ENCODE measurements at regions of chr16 and their contacts with region 1.

Region 1: DNA sequence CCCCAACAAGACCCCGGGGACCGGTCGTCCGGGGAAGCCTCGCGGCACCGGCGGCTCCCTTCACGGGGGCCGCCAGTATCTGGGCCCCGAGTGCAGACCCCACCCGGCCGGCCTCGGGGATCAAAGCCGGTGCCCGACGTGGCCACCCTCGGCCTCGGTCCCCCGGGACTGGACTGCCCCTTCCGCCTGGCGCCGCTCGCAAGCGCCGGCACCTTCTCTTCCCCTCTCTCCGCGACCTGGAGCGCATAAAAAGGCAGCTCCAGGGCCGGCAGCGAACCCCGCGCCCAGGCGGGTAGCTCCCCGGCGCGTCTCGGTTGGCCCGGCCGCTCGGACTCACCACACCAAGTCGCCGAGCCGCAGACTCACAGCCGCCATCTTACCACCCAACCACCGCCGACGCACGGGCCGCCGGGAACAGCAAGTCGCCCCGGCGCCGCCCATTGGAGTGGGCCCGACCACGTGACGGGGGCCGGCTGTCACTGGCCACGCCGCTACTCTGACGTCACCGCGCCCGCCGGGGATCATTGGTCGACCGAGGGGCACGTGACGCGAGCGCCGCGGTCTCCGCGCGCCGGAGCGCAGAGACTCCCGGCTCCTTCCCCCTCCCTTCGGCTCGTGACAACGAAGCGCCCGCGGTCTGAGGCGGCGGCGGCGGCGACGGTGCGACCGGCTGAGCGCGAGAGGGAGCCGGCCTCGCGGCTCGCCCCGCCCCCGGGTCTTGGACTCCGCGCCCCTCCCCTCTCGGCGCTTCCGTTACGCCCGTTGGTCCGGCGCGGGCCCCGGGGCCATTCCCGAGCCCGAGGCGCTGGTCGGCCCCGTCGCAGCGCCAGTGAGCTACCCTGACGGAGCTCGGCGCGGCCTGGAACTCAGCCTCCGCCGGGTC is at the starts of genes GLYR1 and UBN1:
- DNase-seq: peak; percentile 99
- H3K4me3 Mint-ChIP-seq: peak within 1 kb of the TSS; percentile 91
- H3K27ac Mint-ChIP-seq: peak within 1 kb of the TSS; percentile 80
- H3K4me1 Mint-ChIP-seq: peaks cover 56% of the 10 kb centered on the region
- H3K27me3 Mint-ChIP-seq: no peaks in the 10 kb centered on the region
- total RNA-seq, gene GLYR1: 119 and 120 TPM in 2 replicates
- total RNA-seq, gene UBN1: 39.6 and 42.6 TPM in 2 replicates

Region 2: DNA sequence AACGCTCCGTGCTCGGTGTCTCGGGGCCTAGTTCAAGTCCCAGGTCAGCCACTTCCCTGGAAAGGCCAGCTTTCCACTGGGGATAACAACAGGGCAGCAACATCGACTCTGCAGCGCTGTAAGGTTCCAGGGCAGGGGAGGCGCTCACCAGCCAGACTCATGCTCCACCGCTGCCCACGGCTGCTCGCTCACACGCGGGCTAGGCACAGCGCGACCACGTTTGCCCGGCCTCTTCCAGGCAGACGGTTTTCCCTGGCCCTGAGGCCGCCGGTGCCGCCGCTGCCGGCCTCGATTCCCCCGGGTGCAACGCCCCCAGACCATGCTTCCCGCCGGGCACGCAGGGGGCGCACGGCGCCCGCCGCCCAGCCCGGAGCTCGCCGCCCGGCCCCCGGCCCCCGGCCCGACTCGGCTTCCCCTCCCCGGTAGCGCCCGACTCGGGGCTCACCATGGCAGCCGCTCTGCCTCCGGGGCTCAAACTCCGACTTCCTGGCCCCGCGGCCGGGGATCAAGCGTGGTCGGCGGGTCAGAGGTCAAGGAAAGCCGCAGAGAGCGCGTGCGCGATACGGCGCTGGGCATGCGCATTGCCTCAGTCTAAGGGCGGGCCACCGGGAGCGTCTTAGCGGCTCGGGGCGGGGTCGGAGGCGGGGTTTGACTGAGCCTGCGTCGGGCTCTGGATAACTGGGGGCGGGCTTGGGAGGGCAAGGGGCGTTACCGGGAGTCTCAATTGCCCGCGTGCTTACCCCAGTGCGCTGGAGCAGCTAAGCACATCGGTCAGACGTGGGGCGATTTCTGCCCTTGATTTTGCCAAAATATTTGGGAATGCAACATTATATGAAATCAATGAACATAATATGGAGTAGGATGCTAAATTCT is 496.1 kb before region 1 on chr16 and contains the start of gene PAM16:
- intact Hi-C with region 1: loop called (anchors 5 kb)
- DNase-seq: peak; percentile 99
- H3K4me3 Mint-ChIP-seq: peak within 1 kb of the TSS; percentile 97
- H3K27ac Mint-ChIP-seq: peak within 1 kb of the TSS; percentile 93
- H3K4me1 Mint-ChIP-seq: peaks cover 13% of the 10 kb centered on the region
- H3K27me3 Mint-ChIP-seq: no peaks in the 10 kb centered on the region
- total RNA-seq, gene PAM16: 91.5 and 106 TPM in 2 replicates

Region 3: GRCh38 chr16:4624015-4624826 is 222.9 kb before region 1 on chr16 and contains the start of gene MGRN1:
- intact Hi-C with region 1: loop called (anchors 2 kb)
- DNase-seq: peak; percentile 93
- H3K4me3 Mint-ChIP-seq: peak within 1 kb of the TSS; percentile 99
- H3K27ac Mint-ChIP-seq: peak within 1 kb of the TSS; percentile 95
- H3K4me1 Mint-ChIP-seq: peaks cover 22% of the 10 kb centered on the region
- H3K27me3 Mint-ChIP-seq: no peaks in the 10 kb centered on the region
- total RNA-seq, gene MGRN1: 110 and 119 TPM in 2 replicates

Region 4: GRCh38 chr16:4734063-4734729 is 112.9 kb before region 1 on chr16 and contains the starts of genes ANKS3 and DNAAF8:
- intact Hi-C with region 1: loop called (anchors 1 kb)
- DNase-seq: peak; percentile 81
- H3K4me3 Mint-ChIP-seq: peak within 1 kb of the TSS; percentile 88
- H3K27ac Mint-ChIP-seq: peak within 1 kb of the TSS; percentile 84
- H3K4me1 Mint-ChIP-seq: peaks cover 26% of the 10 kb centered on the region
- H3K27me3 Mint-ChIP-seq: no peaks in the 10 kb centered on the region
- total RNA-seq, gene ANKS3: 21.1 and 25.8 TPM in 2 replicates
- total RNA-seq, gene DNAAF8: not detected in 2 replicates

Region 5: GRCh38 chr16:4802659-4803287 is 44.4 kb before region 1 on chr16:
- intact Hi-C with region 1: loop called (anchors 1 kb)
- DNase-seq: peak; percentile 89
- H3K4me3 Mint-ChIP-seq: peak overlapping the region; percentile 80
- H3K27ac Mint-ChIP-seq: no peak overlapping the region
- H3K4me1 Mint-ChIP-seq: peaks cover 9% of the 10 kb centered on the region
- H3K27me3 Mint-ChIP-seq: no peaks in the 10 kb centered on the region

Region 6: GRCh38 chr16:5033256-5034169 is 186.4 kb after region 1 on chr16 and contains the start of gene NAGPA:
- intact Hi-C with region 1: loop called (anchors 5 kb)
- DNase-seq: peak; percentile 78
- H3K4me3 Mint-ChIP-seq: peak within 1 kb of the TSS; percentile 85
- H3K27ac Mint-ChIP-seq: peak within 1 kb of the TSS; percentile 76
- H3K4me1 Mint-ChIP-seq: peaks cover 15% of the 10 kb centered on the region
- H3K27me3 Mint-ChIP-seq: no peaks in the 10 kb centered on the region
- total RNA-seq, gene NAGPA: 11.6 and 12.5 TPM in 2 replicates

Measured in activated T-helper 1 cell treated with anti-CD3 and anti-CD28 coated beads, Interleukin-12 subunit alpha, Interleukin-12 subunit beta, Interleukin-2, Interleukin-4 antibody, amounts not matched to agents 30 ng/mL and 10 ng/mL and 1 ng/mL, durations not matched to agents 14 hours and 24 hours and 36 hours (primary cell).